Activated B cell treated with CpG ODN at 0.5 μM for 24 hours (primary cell): ENCODE measurements at regions of chr15 and their contacts with region 1.

Region 1: GRCh38 chr15:58933281-58934113 is at the start of gene SLTM:
- DNase-seq: peak; percentile 87
- ATAC-seq: peak; percentile 91
- H3K4me3 Mint-ChIP-seq: peak within 1 kb of the TSS; percentile 99
- H3K27ac Mint-ChIP-seq: peak within 1 kb of the TSS; percentile 100
- H3K4me1 Mint-ChIP-seq: peaks cover 29% of the 10 kb centered on the region
- H3K27me3 Mint-ChIP-seq: no peaks in the 10 kb centered on the region
- CTCF ChIP-seq: no peak
- total RNA-seq, gene SLTM: 124 and 159 TPM in 2 replicates

Region 2: DNA sequence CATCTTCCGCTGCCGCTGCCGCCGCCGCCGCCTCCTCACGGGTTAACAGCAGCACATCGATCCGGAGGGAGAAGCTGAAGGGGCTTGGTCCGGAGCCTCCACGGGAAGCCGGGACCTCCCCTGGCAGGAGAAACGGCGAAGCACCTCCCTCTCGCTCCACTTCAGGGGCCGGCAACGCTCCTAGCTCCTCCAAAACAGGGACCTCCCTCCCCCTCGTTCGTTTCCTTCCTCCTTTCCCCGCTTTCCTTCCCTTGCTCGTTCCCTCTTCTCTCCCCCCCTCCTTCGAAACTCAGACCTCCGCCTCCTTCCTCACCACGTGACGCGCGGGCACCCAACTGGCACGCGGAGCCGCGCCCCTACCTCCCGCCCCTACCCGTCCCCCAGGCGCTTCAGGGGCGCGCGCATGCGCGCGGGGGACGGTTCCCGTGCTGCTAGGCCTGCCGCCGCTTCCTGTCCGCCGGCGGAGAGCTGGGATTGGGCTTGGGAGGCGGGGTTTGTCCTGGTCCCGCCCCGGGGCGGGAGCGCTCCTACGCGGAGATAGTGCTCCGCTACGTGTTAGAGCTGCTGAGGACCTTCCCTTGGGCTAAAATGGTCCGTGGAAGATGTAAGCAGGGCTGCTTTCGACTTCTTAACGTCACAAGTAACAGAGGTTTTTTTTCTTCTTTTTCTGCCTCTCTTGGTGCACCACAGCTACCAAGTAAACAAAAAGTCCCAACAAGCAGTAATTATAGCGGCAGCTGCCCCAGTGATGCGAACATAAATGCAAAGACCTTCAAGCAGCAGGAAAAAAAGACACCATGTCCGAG is 183.8 kb before region 1 on chr15 and contains the start of gene ADAM10:
- CTCF ChIA-PET with region 1: no interaction called
- POLR2A ChIA-PET with region 1: interaction called, 3 read pairs
- intact Hi-C with region 1: loop called (anchors 1 kb)
- DNase-seq: peak; percentile 95
- ATAC-seq: peak; percentile 92
- H3K4me3 Mint-ChIP-seq: peak within 1 kb of the TSS; percentile 96
- H3K27ac Mint-ChIP-seq: peak within 1 kb of the TSS; percentile 97
- H3K4me1 Mint-ChIP-seq: peaks cover 44% of the 10 kb centered on the region
- H3K27me3 Mint-ChIP-seq: no peaks in the 10 kb centered on the region
- CTCF ChIP-seq: no peak
- total RNA-seq, gene ADAM10: 87.7 and 91.6 TPM in 2 replicates

Region 3: GRCh38 chr15:58889363-58889762 is 44.1 kb before region 1 on chr15:
- CTCF ChIA-PET with region 1: no interaction called
- POLR2A ChIA-PET with region 1: no interaction called
- intact Hi-C with region 1: loop called (anchors 5 kb)
- DNase-seq: no peak
- ATAC-seq: no peak
- H3K4me3 Mint-ChIP-seq: no peak overlapping the region
- H3K27ac Mint-ChIP-seq: no peak overlapping the region
- H3K4me1 Mint-ChIP-seq: no peaks in the 10 kb centered on the region
- H3K27me3 Mint-ChIP-seq: no peaks in the 10 kb centered on the region
- CTCF ChIP-seq: no peak

Region 4: DNA sequence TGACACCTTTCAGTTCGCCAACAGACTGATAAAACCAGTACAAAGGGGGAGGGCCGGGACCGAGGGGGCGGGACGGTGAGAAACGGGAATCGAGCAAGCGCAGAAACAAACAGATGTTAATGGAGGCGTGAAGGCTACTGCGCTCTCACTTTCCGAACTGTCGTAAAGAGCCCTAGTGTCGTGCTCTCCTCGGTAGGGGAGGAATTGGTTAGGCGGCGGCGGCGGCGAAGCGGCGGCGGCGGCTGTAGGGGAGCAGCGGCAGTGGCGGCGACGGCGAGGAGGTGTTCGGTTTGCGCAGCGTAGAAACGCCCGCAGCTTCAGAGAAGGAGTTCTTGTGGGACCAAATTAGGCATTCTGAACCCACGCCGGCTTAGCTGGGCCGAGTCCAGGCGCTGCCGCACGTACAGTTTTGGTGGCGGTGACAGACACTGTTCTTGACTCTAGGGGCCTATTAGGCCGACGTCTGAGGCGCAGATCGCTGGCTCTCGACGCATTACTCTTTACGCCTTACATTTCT is 54.0 kb after region 1 on chr15 and contains the start of gene RNF111:
- CTCF ChIA-PET with region 1: no interaction called
- POLR2A ChIA-PET with region 1: no interaction called
- intact Hi-C with region 1: loop called (anchors 1 kb)
- DNase-seq: peak; percentile 78
- ATAC-seq: peak; percentile 91
- H3K4me3 Mint-ChIP-seq: peak within 1 kb of the TSS; percentile 95
- H3K27ac Mint-ChIP-seq: peak within 1 kb of the TSS; percentile 94
- H3K4me1 Mint-ChIP-seq: peaks cover 45% of the 10 kb centered on the region
- H3K27me3 Mint-ChIP-seq: no peaks in the 10 kb centered on the region
- CTCF ChIP-seq: no peak
- total RNA-seq, gene RNF111: 52.5 and 55.8 TPM in 2 replicates

Region 5: DNA sequence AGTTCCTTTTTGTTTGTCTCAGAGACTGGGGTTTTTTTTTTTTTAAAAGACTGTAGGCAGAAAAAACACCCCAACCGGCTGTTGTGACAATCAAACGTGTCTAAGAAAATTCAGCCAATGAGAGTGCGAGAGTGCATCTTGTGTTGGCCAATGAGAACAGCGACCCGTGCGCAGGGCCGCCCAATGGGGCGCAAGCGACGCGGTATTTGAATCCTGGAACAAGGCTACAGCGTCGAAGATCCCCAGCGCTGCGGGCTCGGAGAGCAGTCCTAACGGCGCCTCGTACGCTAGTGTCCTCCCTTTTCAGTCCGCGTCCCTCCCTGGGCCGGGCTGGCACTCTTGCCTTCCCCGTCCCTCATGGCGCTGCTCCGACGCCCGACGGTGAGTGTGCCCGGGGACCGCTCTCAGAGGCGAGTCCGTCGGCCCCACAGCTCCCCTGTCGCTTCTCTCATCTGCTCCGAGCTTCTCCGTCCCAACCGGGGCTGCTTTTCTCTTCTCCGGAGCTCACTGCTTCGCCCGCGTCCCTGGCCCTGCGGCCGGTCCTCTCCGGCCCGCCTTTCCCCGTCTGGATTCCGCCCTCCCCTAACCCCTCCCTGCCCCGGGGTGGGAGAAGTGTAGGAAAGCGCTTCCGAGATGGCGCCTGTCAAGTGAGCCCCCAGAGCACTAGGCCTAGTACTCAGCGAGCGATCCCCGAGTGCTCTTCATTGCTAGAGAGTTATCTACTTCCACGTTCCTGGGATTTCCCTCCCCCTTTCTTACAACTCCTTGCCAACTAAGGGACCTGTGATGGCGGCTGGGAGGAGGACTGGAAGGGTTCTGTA is 171.6 kb after region 1 on chr15 and contains the start of gene CCNB2:
- CTCF ChIA-PET with region 1: no interaction called
- POLR2A ChIA-PET with region 1: interaction called, 4 read pairs
- intact Hi-C with region 1: loop called (anchors 1 kb)
- DNase-seq: peak; percentile 64
- ATAC-seq: peak; percentile 100
- H3K4me3 Mint-ChIP-seq: peak within 1 kb of the TSS; percentile 85
- H3K27ac Mint-ChIP-seq: peak within 1 kb of the TSS; percentile 80
- H3K4me1 Mint-ChIP-seq: peaks cover 13% of the 10 kb centered on the region
- H3K27me3 Mint-ChIP-seq: no peaks in the 10 kb centered on the region
- CTCF ChIP-seq: no peak
- total RNA-seq, gene CCNB2: 0.82 and 0.88 TPM in 2 replicates

Region 6: GRCh38 chr15:59656897-59657634 is 723.6 kb after region 1 on chr15 and contains the start of gene GTF2A2:
- CTCF ChIA-PET with region 1: no interaction called
- POLR2A ChIA-PET with region 1: interaction called, 3 read pairs
- intact Hi-C with region 1: loop called (anchors 2 kb)
- DNase-seq: peak; percentile 91
- ATAC-seq: peak; percentile 100
- H3K4me3 Mint-ChIP-seq: no peak within 1 kb of the TSS
- H3K27ac Mint-ChIP-seq: peak within 1 kb of the TSS; percentile 82
- H3K4me1 Mint-ChIP-seq: peaks cover 14% of the 10 kb centered on the region
- H3K27me3 Mint-ChIP-seq: no peaks in the 10 kb centered on the region
- CTCF ChIP-seq: no peak
- total RNA-seq, gene GTF2A2: 77.4 and 95.2 TPM in 2 replicates

Region 7: GRCh38 chr15:60478566-60479360 is 1545.3 kb after region 1 on chr15 and contains the start of gene ICE2:
- CTCF ChIA-PET with region 1: no interaction called
- POLR2A ChIA-PET with region 1: no interaction called
- intact Hi-C with region 1: loop called (anchors 5 kb)
- DNase-seq: peak; percentile 91
- ATAC-seq: peak; percentile 93
- H3K4me3 Mint-ChIP-seq: peak within 1 kb of the TSS; percentile 99
- H3K27ac Mint-ChIP-seq: peak within 1 kb of the TSS; percentile 98
- H3K4me1 Mint-ChIP-seq: peaks cover 52% of the 10 kb centered on the region
- H3K27me3 Mint-ChIP-seq: no peaks in the 10 kb centered on the region
- CTCF ChIP-seq: no peak
- total RNA-seq, gene ICE2: 55.5 and 78.0 TPM in 2 replicates